ENCODE measurements at regions of chr7 and their contacts with region 1.

Region 1: DNA sequence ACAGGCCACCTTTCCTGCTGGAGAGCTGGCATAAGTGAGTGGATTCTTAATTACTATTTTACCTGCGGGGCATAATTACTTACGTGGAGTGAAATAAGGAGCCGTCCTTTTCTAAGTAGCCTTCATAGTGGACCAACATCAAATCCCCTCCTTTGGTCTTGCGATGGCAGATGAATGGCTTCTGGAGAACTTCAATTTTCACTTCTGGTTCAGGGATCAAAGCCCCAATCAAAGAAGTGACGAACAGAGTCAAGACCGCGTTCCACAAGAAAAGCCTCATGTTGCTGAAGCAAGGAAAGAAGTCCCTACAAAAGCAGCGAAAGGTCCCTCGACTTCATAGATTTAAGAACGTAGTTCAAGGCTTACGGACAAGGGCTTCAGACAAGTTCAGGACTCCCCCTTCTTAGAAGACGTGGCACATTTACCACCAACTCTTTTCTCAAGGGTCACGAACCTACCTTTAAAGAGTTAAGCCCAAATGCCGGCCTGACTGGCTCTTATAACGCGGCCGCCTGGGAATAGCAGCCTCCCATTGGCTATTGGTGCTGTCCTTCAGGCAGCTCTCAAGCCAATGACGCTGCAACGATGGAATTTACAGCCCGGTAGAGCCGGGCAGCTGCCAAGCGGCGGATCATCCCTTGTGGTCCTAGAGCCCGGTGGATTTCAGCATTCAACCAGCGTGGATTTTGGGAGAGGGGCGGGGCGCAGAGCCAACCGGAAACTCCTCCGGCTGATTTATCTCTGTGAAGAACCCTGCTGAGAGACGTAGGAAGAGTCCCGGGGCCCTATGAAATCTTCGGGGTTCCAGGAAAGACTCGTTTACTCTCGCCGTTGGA is at the start of gene FKBP14:
- DNase-seq: peak; percentile 97
- H3K4me3 Mint-ChIP-seq: no peak within 1 kb of the TSS
- H3K27ac Mint-ChIP-seq: peak within 1 kb of the TSS; percentile 88
- H3K4me1 Mint-ChIP-seq: peaks cover 27% of the 10 kb centered on the region
- H3K27me3 Mint-ChIP-seq: no peaks in the 10 kb centered on the region
- total RNA-seq, gene FKBP14: 8.2 and 8.6 TPM in 2 replicates

Region 2: GRCh38 chr7:30062591-30062990 is 36.1 kb after region 1 on chr7:
- intact Hi-C with region 1: loop called (anchors 2 kb)
- DNase-seq: no peak
- H3K4me3 Mint-ChIP-seq: no peak overlapping the region
- H3K27ac Mint-ChIP-seq: no peak overlapping the region
- H3K4me1 Mint-ChIP-seq: no peaks in the 10 kb centered on the region
- H3K27me3 Mint-ChIP-seq: no peaks in the 10 kb centered on the region

Region 3: DNA sequence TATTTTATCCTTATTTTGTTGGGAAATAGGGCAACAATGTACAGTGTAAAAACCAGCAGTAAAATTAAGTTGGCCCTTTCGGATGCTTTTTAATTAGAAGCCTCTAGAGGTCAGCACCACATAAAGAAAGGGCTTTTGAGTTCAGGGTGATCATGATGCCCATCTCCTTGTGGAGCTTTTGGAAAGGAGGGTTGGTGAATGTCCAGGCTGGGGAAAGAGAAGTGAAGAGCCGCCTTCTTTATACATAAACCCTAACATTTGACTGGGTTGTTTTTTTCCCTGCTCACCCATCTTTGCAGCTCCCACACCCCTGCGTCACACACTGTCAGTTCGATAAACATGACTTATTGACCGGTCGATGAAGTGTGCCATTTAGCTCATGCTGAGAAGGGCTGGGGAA is 138.1 kb after region 1 on chr7:
- intact Hi-C with region 1: loop called (anchors 5 kb)
- DNase-seq: no peak
- H3K4me3 Mint-ChIP-seq: no peak overlapping the region
- H3K27ac Mint-ChIP-seq: no peak overlapping the region
- H3K4me1 Mint-ChIP-seq: peaks cover 35% of the 10 kb centered on the region
- H3K27me3 Mint-ChIP-seq: no peaks in the 10 kb centered on the region

Region 4: GRCh38 chr7:30348083-30348560 is 321.7 kb after region 1 on chr7:
- intact Hi-C with region 1: loop called (anchors 2 kb)
- DNase-seq: peak; percentile 87
- H3K4me3 Mint-ChIP-seq: peak overlapping the region; percentile 67
- H3K27ac Mint-ChIP-seq: peak overlapping the region; percentile 89
- H3K4me1 Mint-ChIP-seq: peaks cover 54% of the 10 kb centered on the region
- H3K27me3 Mint-ChIP-seq: no peaks in the 10 kb centered on the region

Region 5: GRCh38 chr7:30504347-30505173 is 478.1 kb after region 1 on chr7 and contains the start of gene GGCT:
- intact Hi-C with region 1: loop called (anchors 1 kb)
- DNase-seq: peak; percentile 99
- H3K4me3 Mint-ChIP-seq: peak within 1 kb of the TSS; percentile 87
- H3K27ac Mint-ChIP-seq: peak within 1 kb of the TSS; percentile 84
- H3K4me1 Mint-ChIP-seq: peaks cover 44% of the 10 kb centered on the region
- H3K27me3 Mint-ChIP-seq: no peaks in the 10 kb centered on the region
- total RNA-seq, gene GGCT: 76.1 and 80.3 TPM in 2 replicates

Region 6: GRCh38 chr7:30771174-30771879 is 744.9 kb after region 1 on chr7 and contains the start of gene MINDY4:
- intact Hi-C with region 1: loop called (anchors 5 kb)
- DNase-seq: peak; percentile 91
- H3K4me3 Mint-ChIP-seq: peak within 1 kb of the TSS; percentile 89
- H3K27ac Mint-ChIP-seq: peak within 1 kb of the TSS; percentile 86
- H3K4me1 Mint-ChIP-seq: peaks cover 5% of the 10 kb centered on the region
- H3K27me3 Mint-ChIP-seq: peaks cover 9% of the 10 kb centered on the region
- total RNA-seq, gene MINDY4: 1.2 and 1.3 TPM in 2 replicates

Measured in activated CD4-positive, alpha-beta T cell treated with anti-CD3 and anti-CD28 coated beads, Interleukin-2, amount 10 ng/mL, durations not matched to agents 24 days and 14 days (primary cell).